Heart right ventricle (tissue), 16 donors: ENCODE measurements at regions of chr9 and their contacts with region 1.

Region 1: DNA sequence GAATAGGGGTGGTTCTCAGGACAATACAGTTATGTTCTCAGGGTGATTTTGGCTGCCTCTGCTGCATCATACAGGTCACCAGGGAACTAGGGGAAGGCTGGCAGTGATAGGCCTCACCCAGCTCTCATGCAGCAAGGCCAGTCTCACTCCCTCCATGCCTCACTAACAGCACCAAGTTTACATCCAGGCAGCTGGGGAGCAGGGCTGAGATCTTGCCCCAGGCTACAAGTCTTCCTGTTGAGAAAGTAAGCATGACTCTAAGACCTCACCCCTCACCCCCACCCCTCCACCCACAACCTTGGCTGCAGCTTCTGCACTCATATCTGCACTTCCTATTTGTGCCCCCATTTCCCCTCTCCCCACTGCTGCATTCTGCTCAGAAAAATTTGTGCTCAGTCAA is 481.2 kb downstream of the ACTL7B start:
- DNase-seq: no peak
- ATAC-seq: no peak
- H3K4me3 ChIP-seq: no peak overlapping the region
- H3K27ac ChIP-seq: no peak overlapping the region
- H3K4me1 ChIP-seq: no peaks in the 10 kb centered on the region
- H3K27me3 ChIP-seq: no peaks in the 10 kb centered on the region
- CTCF ChIP-seq: no peak

Region 2: DNA sequence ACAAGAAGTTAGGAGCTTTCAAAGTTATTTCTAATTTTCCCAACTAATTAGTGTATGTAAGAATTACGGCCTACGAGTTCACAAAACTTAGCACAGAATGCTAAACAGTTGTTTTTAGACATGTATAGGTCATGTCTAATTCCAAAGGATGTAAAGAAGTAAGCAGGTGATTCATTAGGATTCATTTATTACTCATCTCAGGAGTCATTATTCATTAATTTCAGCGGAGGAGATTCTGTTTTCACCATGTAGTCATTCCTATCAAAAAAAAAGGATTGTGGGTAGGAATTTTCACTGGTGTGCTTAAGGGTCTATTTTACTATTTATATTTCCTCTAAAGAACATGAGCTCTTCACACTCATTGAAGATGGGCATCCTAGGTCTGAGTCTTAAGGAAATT is 51.0 kb before region 1 on chr9:
- intact Hi-C with region 1: loop called in 1 of 10 experiments (anchors 1 kb)
- DNase-seq: no peak
- ATAC-seq: no peak
- H3K4me3 ChIP-seq: no peak overlapping the region
- H3K27ac ChIP-seq: no peak overlapping the region
- H3K4me1 ChIP-seq: no peaks in the 10 kb centered on the region
- H3K27me3 ChIP-seq: no peaks in the 10 kb centered on the region
- CTCF ChIP-seq: no peak